ENCODE measurements at regions of chr5 and their contacts with region 1.

Region 1: GRCh38 chr5:96614110-96614691 is 48.0 kb upstream of the CAST start:
- DNase-seq: peak; percentile 52 to 88
- H3K4me3 ChIP-seq: no peak overlapping the region
- H3K27ac ChIP-seq: peak overlapping the region in 3 of 5 donors; percentile 54 to 61 (median 55)
- H3K4me1 ChIP-seq: peaks cover 0 to 16% (median 6%) of the 10 kb centered on the region in 4 donors
- H3K27me3 ChIP-seq: no peaks in the 10 kb centered on the region
- CTCF ChIP-seq: peak in 4 of 7 experiments; percentile 23 to 74 (median 59)
- EP300 ChIP-seq: no peak
- POLR2A ChIP-seq: no peak

Region 2: GRCh38 chr5:95704150-95704549 is 910.1 kb before region 1 on chr5:
- intact Hi-C with region 1: no loop called
- DNase-seq: no peak
- H3K4me3 ChIP-seq: no peak overlapping the region
- H3K27ac ChIP-seq: no peak overlapping the region
- H3K4me1 ChIP-seq: no peaks in the 10 kb centered on the region
- H3K27me3 ChIP-seq: no peaks in the 10 kb centered on the region
- CTCF ChIP-seq: no peak
- EP300 ChIP-seq: no peak
- POLR2A ChIP-seq: no peak

Region 3: GRCh38 chr5:96687812-96688453 is 73.7 kb after region 1 on chr5:
- intact Hi-C with region 1: loop called (anchors 10 kb)
- DNase-seq: peak in 1 of 2 donors; percentile 76
- H3K4me3 ChIP-seq: no peak overlapping the region
- H3K27ac ChIP-seq: no peak overlapping the region
- H3K4me1 ChIP-seq: peaks cover 0 to 47% (median 7%) of the 10 kb centered on the region in 4 donors
- H3K27me3 ChIP-seq: no peaks in the 10 kb centered on the region
- CTCF ChIP-seq: peak in 5 of 7 experiments; percentile 31 to 60 (median 53)
- EP300 ChIP-seq: no peak
- POLR2A ChIP-seq: no peak

Region 4: GRCh38 chr5:96752341-96753016 is 138.3 kb after region 1 on chr5:
- intact Hi-C with region 1: no loop called
- DNase-seq: peak in 1 of 2 donors; percentile 88
- H3K4me3 ChIP-seq: no peak overlapping the region
- H3K27ac ChIP-seq: no peak overlapping the region
- H3K4me1 ChIP-seq: peaks cover 0 to 13% (median 4%) of the 10 kb centered on the region in 4 donors
- H3K27me3 ChIP-seq: no peaks in the 10 kb centered on the region
- CTCF ChIP-seq: peak in 4 of 7 experiments; percentile 57 to 75 (median 67)
- EP300 ChIP-seq: no peak
- POLR2A ChIP-seq: no peak